ENCODE measurements at regions of chr17 and their contacts with region 1.

Region 1: DNA sequence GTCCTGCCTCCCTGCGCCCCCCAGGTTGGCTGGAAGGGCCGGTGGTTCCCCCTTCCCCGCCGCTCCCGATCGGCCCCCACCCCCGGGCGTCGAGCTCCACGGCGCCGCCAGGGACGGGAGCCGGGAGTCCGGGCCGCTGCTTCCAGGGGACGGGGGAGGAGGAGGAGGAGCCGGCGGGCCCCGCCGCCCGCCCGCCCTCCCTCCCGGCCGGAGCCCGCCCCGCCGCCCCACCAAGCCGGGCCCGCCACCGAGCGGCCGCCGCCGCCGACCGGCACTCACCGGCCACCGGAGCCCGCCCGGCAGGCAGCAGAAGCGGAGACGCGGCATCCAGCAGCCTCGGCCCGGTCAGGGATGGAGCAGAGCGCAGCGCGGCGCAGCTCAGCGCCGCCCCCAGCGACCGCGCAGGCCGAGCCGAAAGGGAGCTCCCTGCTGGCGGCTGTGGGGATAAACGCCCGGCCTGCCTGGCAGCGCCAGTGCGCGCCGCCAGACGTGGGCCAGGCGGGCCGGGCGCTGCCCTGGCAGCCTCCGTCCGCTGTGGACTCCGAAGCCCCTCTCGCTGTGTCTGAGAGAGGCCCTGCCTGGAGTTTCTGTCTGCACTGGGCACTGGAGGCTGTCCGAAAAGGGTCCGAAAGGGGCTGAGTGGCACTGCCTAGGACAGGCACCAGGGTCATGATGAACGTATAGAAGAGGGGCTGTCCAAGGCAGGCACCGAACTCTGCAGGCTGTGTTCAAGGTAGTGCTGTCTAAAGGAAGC is at the start of gene MYO18A:
- DNase-seq: peak; percentile 32
- H3K4me3 ChIP-seq: peak within 1 kb of the TSS; percentile 67
- H3K27ac ChIP-seq: no peak within 1 kb of the TSS
- H3K27me3 ChIP-seq: no peaks in the 10 kb centered on the region
- CTCF ChIP-seq: peak; percentile 77
- polyA plus RNA-seq, gene MYO18A: 9.8 and 16.7 TPM in 2 replicates

Region 2: DNA sequence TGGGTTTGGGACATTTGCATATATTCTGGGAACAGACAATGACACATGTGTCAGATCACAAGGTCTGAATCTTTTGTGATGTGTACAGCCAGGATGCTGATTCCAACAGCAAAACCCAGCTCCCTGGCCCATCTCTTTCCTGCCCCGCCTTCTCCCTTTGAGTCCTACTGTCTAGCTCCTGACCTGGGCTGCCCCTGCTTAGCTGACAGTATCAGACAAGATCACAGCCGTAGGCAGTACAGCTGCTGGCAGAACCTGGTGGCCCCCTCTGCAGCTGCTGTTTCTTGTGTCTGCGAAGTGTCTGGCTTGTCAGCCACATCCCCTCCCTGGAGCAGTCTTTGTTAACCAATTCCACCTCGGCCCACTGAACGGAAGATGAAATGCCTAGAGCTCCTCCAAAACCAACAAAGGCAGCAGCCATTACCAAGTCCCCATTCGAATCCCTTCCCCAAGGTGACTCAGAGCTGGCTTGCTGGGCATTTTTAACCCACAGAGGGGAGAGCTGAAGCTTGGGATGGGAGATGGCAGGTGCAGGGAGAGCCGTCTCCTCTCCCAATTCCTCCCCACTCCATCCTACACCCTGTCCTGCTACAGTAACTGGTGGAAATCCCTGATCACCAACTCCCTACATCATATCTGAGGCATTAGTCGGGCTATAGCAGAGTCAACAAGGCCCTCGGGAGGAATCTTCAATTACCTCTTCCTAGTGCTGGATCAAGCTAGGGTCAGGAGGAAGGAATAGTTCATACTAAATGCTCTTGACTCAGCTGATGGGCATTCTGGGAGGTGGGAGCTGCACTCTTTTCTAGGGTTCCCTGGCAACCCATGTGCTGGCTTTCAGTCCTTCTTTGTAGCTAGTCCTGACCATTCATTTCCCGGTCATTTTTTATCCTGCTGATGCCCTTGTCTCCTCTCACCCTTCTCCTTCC is 131.5 kb before region 1 on chr17:
- CTCF ChIA-PET with region 1: no interaction called
- POLR2A ChIA-PET with region 1: no interaction called
- DNase-seq: no peak
- H3K4me3 ChIP-seq: no peak overlapping the region
- H3K27ac ChIP-seq: no peak overlapping the region
- H3K27me3 ChIP-seq: peaks cover 60% of the 10 kb centered on the region
- CTCF ChIP-seq: no peak

Region 3: GRCh38 chr17:29069526-29070041 is 110.6 kb before region 1 on chr17:
- CTCF ChIA-PET with region 1: no interaction called
- POLR2A ChIA-PET with region 1: no interaction called
- DNase-seq: no peak
- H3K4me3 ChIP-seq: no peak overlapping the region
- H3K27ac ChIP-seq: no peak overlapping the region
- H3K27me3 ChIP-seq: peaks cover 22% of the 10 kb centered on the region
- CTCF ChIP-seq: no peak

Region 4: DNA sequence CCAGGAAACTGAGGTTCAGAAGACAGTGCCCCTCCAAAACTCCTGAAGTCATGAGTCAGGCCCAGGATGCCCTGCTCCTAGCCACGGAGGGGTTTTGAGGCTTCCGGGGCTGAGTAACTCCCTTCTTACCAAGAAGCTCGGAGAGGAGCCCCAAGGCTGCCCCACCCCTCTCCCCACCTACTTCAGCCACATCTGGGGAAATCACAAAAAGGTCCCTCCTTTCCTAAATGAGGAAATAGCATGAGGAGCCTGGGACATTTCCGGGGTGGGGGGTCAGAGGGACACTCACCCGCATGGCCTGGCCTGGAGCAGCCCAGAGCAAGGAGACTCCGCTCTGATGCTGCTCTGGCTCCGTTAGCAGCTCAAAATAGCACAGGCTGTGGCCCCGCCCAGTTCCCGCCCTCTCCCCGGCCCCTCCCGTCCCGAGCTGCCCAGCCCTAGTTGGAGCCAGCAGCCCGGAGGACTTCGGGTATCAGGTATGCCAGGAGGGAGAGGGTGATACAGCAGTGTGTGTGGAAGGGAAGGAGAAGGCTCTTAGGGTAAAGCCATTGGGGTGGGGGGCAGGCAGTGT is 40.1 kb before region 1 on chr17:
- CTCF ChIA-PET with region 1: interaction called, 166 read pairs
- POLR2A ChIA-PET with region 1: interaction called, 5 read pairs
- DNase-seq: no peak
- H3K4me3 ChIP-seq: peak overlapping the region; percentile 53
- H3K27ac ChIP-seq: peak overlapping the region; percentile 70
- H3K27me3 ChIP-seq: no peaks in the 10 kb centered on the region
- CTCF ChIP-seq: no peak

Region 5: DNA sequence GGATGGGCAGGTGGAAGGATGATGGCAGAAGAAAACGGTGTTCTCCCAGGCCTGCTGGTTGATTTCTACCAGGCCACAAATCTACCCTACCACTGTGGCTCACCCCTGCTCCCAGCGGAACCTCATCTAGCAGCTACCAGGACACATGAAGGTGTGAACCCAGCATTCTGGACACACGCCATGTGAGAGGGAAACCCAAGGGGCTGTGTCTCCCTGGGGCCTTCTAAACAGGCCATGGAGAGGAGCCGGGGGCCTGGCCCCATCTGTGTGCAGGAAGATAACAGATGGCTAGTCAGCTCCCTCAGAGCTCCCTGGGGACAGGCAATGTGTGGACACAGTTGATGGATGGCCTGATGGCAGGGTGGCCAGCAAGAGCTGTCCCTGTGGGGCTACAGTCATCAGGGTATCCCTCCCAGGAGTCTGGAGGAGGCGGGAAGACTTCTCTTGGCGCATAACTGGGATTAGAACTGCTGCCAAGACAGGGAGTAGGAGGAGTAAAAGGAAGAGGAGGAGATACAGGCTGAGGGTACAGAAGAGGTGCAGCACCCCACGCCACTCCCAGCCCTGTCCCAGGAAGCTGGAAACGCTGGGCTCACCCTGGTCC is 17.4 kb before region 1 on chr17:
- CTCF ChIA-PET with region 1: interaction called, 15 read pairs
- POLR2A ChIA-PET with region 1: interaction called, 3 read pairs
- DNase-seq: no peak
- H3K4me3 ChIP-seq: no peak overlapping the region
- H3K27ac ChIP-seq: no peak overlapping the region
- H3K27me3 ChIP-seq: no peaks in the 10 kb centered on the region
- CTCF ChIP-seq: no peak

Region 6: GRCh38 chr17:29195465-29196081 is 15.4 kb after region 1 on chr17:
- CTCF ChIA-PET with region 1: interaction called, 40 read pairs
- POLR2A ChIA-PET with region 1: no interaction called
- DNase-seq: no peak
- H3K4me3 ChIP-seq: no peak overlapping the region
- H3K27ac ChIP-seq: no peak overlapping the region
- H3K27me3 ChIP-seq: peaks cover 14% of the 10 kb centered on the region
- CTCF ChIP-seq: no peak